Activated T-helper 1 cell treated with anti-CD3 and anti-CD28 coated beads, Interleukin-12 subunit alpha, Interleukin-12 subunit beta, Interleukin-2, Interleukin-4 antibody, amounts not matched to agents 30 ng/mL and 10 ng/mL and 1 ng/mL, durations not matched to agents 14 hours and 24 hours and 36 hours (primary cell): ENCODE measurements at regions of chr4 and their contacts with region 1.

Region 1: GRCh38 chr4:15479089-15479912 is 9.6 kb downstream of the CC2D2A start:
- DNase-seq: no peak
- H3K4me3 Mint-ChIP-seq: no peak overlapping the region
- H3K27ac Mint-ChIP-seq: no peak overlapping the region
- H3K4me1 Mint-ChIP-seq: no peaks in the 10 kb centered on the region
- H3K27me3 Mint-ChIP-seq: no peaks in the 10 kb centered on the region

Region 2: GRCh38 chr4:15649914-15650545 is 170.7 kb after region 1 on chr4:
- intact Hi-C with region 1: loop called (anchors 1 kb)
- DNase-seq: peak; percentile 60
- H3K4me3 Mint-ChIP-seq: peak overlapping the region; percentile 13
- H3K27ac Mint-ChIP-seq: peak overlapping the region; percentile 42
- H3K4me1 Mint-ChIP-seq: peaks cover 59% of the 10 kb centered on the region
- H3K27me3 Mint-ChIP-seq: no peaks in the 10 kb centered on the region

Region 3: GRCh38 chr4:15805583-15806517 is 326.5 kb after region 1 on chr4:
- intact Hi-C with region 1: loop called (anchors 2 kb)
- DNase-seq: no peak
- H3K4me3 Mint-ChIP-seq: no peak overlapping the region
- H3K27ac Mint-ChIP-seq: no peak overlapping the region
- H3K4me1 Mint-ChIP-seq: peaks cover 74% of the 10 kb centered on the region
- H3K27me3 Mint-ChIP-seq: no peaks in the 10 kb centered on the region

Region 4: GRCh38 chr4:15956179-15956850 is 477.0 kb after region 1 on chr4:
- intact Hi-C with region 1: loop called (anchors 1 kb)
- DNase-seq: peak; percentile 61
- H3K4me3 Mint-ChIP-seq: no peak overlapping the region
- H3K27ac Mint-ChIP-seq: no peak overlapping the region
- H3K4me1 Mint-ChIP-seq: peaks cover 6% of the 10 kb centered on the region
- H3K27me3 Mint-ChIP-seq: peaks cover 11% of the 10 kb centered on the region

Region 5: GRCh38 chr4:16001484-16001858 is 522.2 kb after region 1 on chr4:
- intact Hi-C with region 1: loop called (anchors 1 kb)
- DNase-seq: peak; percentile 27
- H3K4me3 Mint-ChIP-seq: no peak overlapping the region
- H3K27ac Mint-ChIP-seq: no peak overlapping the region
- H3K4me1 Mint-ChIP-seq: no peaks in the 10 kb centered on the region
- H3K27me3 Mint-ChIP-seq: peaks cover 11% of the 10 kb centered on the region